ENCODE measurements at regions of chr3 and their contacts with region 1.

Region 1: GRCh38 chr3:50088725-50089608 is at the start of gene RBM5:
- DNase-seq: peak; percentile 98
- H3K4me3 ChIP-seq: peak within 1 kb of the TSS; percentile 83 to 97 (median 96)
- H3K27ac ChIP-seq: peak within 1 kb of the TSS; percentile 95 to 98 (median 96)
- H3K4me1 ChIP-seq: peaks cover 16 to 29% (median 27%) of the 10 kb centered on the region in 4 donors
- H3K27me3 ChIP-seq: no peaks in the 10 kb centered on the region
- CTCF ChIP-seq: peak in 1 of 3 experiments; percentile 21
- EP300 ChIP-seq: no peak
- POLR2A ChIP-seq: peak; percentile 62
- total RNA-seq, gene RBM5: 78.0 to 161 (median 95.8) TPM

Region 2: GRCh38 chr3:49856181-49857005 is 232.6 kb before region 1 on chr3 and contains the start of gene TRAIP:
- intact Hi-C with region 1: loop called (anchors 5 kb)
- DNase-seq: peak; percentile 99
- H3K4me3 ChIP-seq: peak within 1 kb of the TSS; percentile 59 to 80 (median 61)
- H3K27ac ChIP-seq: peak within 1 kb of the TSS; percentile 75 to 81 (median 79)
- H3K4me1 ChIP-seq: peaks cover 6 to 16% (median 12%) of the 10 kb centered on the region in 4 donors
- H3K27me3 ChIP-seq: no peaks in the 10 kb centered on the region
- CTCF ChIP-seq: no peak
- EP300 ChIP-seq: no peak
- POLR2A ChIP-seq: no peak
- total RNA-seq, gene TRAIP: 0.84 to 1.4 (median 1.3) TPM in 3 of 4 donors, not detected in the other

Region 3: GRCh38 chr3:49939858-49940666 is 148.9 kb before region 1 on chr3 and contains the start of gene RBM6:
- intact Hi-C with region 1: loop called (anchors 2 kb)
- DNase-seq: peak; percentile 99
- H3K4me3 ChIP-seq: peak within 1 kb of the TSS; percentile 75 to 91 (median 88)
- H3K27ac ChIP-seq: peak within 1 kb of the TSS; percentile 95 to 98 (median 96)
- H3K4me1 ChIP-seq: peaks cover 23 to 34% (median 27%) of the 10 kb centered on the region in 4 donors
- H3K27me3 ChIP-seq: no peaks in the 10 kb centered on the region
- CTCF ChIP-seq: peak in 1 of 3 experiments; percentile 17
- EP300 ChIP-seq: no peak
- POLR2A ChIP-seq: peak; percentile 89
- total RNA-seq, gene RBM6: 57.9 to 100 (median 66.9) TPM

Region 4: DNA sequence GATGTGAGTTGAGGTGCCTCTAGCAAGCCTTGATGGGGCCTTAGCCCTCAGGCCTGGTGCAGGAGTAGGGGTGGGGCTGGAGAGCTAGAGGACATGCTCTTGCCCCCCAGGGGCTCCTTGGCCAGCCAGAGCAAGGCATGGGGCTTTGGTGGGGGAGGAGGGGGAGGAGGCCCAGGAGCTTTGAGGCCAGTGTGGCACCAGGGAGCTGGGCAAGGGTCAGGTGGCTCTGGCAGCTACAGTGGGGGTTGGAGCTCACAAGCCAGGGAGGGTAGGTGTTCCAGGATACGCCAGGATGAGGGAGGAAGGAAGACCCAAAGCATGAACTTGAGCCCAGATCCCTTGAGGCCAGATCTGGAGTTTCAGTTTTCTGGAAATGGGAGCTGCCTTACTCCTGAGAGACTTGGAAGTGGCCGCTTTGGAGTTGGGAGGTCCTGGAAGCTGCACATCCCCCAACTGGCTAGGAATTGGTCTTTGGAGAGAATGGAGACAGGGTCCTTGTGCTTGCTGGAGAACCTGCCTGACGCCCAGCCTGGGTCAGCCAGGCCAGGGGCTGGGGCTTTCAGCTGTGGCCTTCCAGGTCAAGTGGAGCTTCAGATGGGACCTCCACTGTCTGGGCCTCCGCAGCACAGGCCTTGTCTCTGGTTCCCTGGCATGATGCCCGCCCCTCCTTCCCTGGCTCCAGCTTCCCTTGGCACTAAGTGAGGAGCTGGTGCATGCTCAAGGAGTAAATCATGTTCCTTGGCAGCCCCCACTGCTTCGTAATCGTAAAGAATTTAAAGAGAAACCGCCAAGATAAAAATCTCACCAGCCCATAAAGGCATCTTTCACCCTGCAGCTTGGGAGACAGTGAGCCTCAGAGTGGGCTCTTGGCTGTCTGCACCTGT is 74.8 kb after region 1 on chr3:
- intact Hi-C with region 1: no loop called
- DNase-seq: no peak
- H3K4me3 ChIP-seq: peak overlapping the region in 2 of 4 donors; percentile 28 to 34
- H3K27ac ChIP-seq: peak overlapping the region; percentile 84 to 87 (median 85)
- H3K4me1 ChIP-seq: peaks cover 88 to 100% (median 100%) of the 10 kb centered on the region in 4 donors
- H3K27me3 ChIP-seq: no peaks in the 10 kb centered on the region
- CTCF ChIP-seq: no peak
- EP300 ChIP-seq: no peak
- POLR2A ChIP-seq: no peak

Measured in esophagus muscularis mucosa (tissue), 4 donors.